Heart left ventricle (tissue), 16 donors: ENCODE measurements at regions of chr10 and their contacts with region 1.

Region 1: GRCh38 chr10:35218339-35218955 is 91.8 kb downstream of the CREM start:
- DNase-seq: peak; percentile 79 to 89 (median 82)
- ATAC-seq: peak in 3 of 4 donors; percentile 64 to 77 (median 71)
- H3K4me3 ChIP-seq: no peak overlapping the region
- H3K27ac ChIP-seq: peak overlapping the region in 10 of 12 donors; percentile 32 to 87 (median 63)
- H3K4me1 ChIP-seq: peaks cover 0 to 32% (median 20%) of the 10 kb centered on the region in 12 donors
- H3K27me3 ChIP-seq: no peaks in the 10 kb centered on the region
- CTCF ChIP-seq: peak; percentile 75 to 89 (median 84)
- POLR2A ChIP-seq: no peak

Region 2: DNA sequence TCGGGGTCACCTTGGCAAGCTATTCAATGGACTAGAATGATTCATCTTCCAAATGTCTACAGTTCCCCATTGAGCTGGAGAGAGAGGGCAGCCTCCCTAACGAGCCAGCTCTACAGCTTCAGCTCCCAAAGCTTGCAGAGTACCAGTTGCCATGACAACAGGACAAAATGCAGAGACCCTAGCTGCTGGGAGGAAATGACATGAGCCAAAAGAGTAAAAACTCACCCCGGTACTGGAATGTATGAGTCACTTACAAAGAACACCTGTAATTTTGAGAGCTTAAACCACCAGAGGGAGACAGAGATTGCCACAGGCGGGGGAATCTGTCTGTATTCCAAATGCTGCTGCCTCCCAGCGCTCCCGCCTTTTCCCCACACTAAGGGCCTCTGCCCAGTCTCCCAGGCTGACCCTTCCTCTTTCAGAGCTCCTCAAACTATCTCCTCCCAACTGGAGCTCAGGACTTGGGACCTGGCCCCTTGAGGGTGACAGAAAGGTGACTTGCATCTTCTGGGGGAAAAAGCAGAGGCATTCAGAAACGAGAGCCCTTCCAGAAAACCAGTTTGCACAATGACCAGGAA is 223.8 kb before region 1 on chr10:
- intact Hi-C with region 1: loop called in 2 of 10 experiments (anchors 5 kb)
- DNase-seq: peak in 1 of 5 donors; percentile 30
- ATAC-seq: peak; percentile 58 to 79 (median 70)
- H3K4me3 ChIP-seq: no peak overlapping the region
- H3K27ac ChIP-seq: no peak overlapping the region
- H3K4me1 ChIP-seq: peaks cover 0 to 10% (median 0%) of the 10 kb centered on the region in 12 donors
- H3K27me3 ChIP-seq: no peaks in the 10 kb centered on the region
- CTCF ChIP-seq: peak in 11 of 12 donors; percentile 29 to 64 (median 49)
- POLR2A ChIP-seq: no peak

Region 3: GRCh38 chr10:35195361-35196306 is 22.8 kb before region 1 on chr10:
- intact Hi-C with region 1: loop called in 1 of 10 experiments (anchors 2 kb)
- DNase-seq: peak in 4 of 5 donors; percentile 80 to 86 (median 85)
- ATAC-seq: peak; percentile 80 to 90 (median 88)
- H3K4me3 ChIP-seq: peak overlapping the region in 11 of 12 donors; percentile 35 to 63 (median 53)
- H3K27ac ChIP-seq: peak overlapping the region; percentile 89 to 99 (median 92)
- H3K4me1 ChIP-seq: peaks cover 0 to 52% (median 15%) of the 10 kb centered on the region in 12 donors
- H3K27me3 ChIP-seq: no peaks in the 10 kb centered on the region
- CTCF ChIP-seq: peak; percentile 70 to 93 (median 86)
- POLR2A ChIP-seq: peak in 1 of 2 donors; percentile 23